MCF 10A (cell line): ENCODE measurements at regions of chr1 and their contacts with region 1.

Region 1: GRCh38 chr1:24321697-24322469 is 2.7 kb downstream of the GRHL3 start:
- DNase-seq: peak; percentile 95
- H3K4me3 Mint-ChIP-seq: peak overlapping the region; percentile 74
- H3K27ac Mint-ChIP-seq: peak overlapping the region; percentile 87
- H3K4me1 Mint-ChIP-seq: peaks cover 64% of the 10 kb centered on the region
- H3K27me3 Mint-ChIP-seq: no peaks in the 10 kb centered on the region
- CTCF ChIP-seq: no peak

Region 2: DNA sequence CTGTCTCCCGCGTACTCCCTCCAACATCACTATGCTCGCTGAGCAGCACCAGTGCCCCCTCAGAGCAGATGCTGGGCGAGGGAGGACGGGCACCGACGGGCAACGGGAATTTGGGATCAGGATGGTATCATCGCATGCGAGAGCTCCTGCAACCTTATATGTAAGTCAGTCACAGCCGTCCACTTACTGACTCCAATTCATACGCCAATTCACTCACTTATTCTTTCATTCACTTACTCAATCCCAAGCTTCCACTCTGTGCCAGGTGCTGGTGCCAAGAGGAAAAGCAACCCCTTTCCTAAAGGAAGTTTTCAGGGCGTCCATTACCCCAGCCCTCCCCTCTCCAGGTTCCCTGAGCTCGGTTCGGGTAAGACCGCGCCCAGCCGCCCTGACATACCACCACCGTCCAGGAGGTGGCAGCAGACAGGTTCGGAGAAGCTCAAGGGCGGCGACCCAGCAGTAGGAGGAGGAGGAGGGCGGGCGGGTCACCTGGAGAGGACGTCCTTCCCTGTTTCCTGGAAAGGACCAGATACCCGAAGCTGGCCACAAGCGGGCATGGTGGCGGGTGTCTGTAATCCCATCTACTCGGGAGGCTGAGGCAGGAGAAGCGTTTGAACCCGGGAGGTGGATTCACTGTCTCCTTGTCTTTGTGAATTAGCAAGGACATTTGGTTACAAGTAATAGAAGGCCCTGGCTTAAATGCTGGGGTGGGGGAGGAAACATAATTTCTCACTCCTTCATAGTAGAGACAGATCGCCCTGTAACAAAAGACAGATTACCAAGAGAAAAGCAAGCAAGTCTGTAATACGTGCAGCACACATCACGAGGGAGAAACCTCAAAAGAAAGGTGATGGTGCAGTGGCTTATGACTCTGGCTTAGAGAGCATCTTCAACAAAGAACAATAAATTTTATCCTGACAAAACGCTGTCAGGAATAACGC is 171.4 kb before region 1 on chr1:
- CTCF ChIA-PET with region 1: interaction called, 4 read pairs
- POLR2A ChIA-PET with region 1: interaction called, 14 read pairs
- intact Hi-C with region 1: no loop called
- DNase-seq: peak; percentile 90
- H3K4me3 Mint-ChIP-seq: peak overlapping the region; percentile 58
- H3K27ac Mint-ChIP-seq: peak overlapping the region; percentile 3
- H3K4me1 Mint-ChIP-seq: peaks cover 20% of the 10 kb centered on the region
- H3K27me3 Mint-ChIP-seq: no peaks in the 10 kb centered on the region
- CTCF ChIP-seq: peak; percentile 81

Region 3: GRCh38 chr1:24289937-24290595 is 31.8 kb before region 1 on chr1:
- CTCF ChIA-PET with region 1: interaction called, 6 read pairs
- POLR2A ChIA-PET with region 1: interaction called, 400 read pairs
- intact Hi-C with region 1: loop called (anchors 2 kb)
- DNase-seq: peak; percentile 99
- H3K4me3 Mint-ChIP-seq: peak overlapping the region; percentile 44
- H3K27ac Mint-ChIP-seq: peak overlapping the region; percentile 94
- H3K4me1 Mint-ChIP-seq: peaks cover 55% of the 10 kb centered on the region
- H3K27me3 Mint-ChIP-seq: no peaks in the 10 kb centered on the region
- CTCF ChIP-seq: no peak

Region 4: DNA sequence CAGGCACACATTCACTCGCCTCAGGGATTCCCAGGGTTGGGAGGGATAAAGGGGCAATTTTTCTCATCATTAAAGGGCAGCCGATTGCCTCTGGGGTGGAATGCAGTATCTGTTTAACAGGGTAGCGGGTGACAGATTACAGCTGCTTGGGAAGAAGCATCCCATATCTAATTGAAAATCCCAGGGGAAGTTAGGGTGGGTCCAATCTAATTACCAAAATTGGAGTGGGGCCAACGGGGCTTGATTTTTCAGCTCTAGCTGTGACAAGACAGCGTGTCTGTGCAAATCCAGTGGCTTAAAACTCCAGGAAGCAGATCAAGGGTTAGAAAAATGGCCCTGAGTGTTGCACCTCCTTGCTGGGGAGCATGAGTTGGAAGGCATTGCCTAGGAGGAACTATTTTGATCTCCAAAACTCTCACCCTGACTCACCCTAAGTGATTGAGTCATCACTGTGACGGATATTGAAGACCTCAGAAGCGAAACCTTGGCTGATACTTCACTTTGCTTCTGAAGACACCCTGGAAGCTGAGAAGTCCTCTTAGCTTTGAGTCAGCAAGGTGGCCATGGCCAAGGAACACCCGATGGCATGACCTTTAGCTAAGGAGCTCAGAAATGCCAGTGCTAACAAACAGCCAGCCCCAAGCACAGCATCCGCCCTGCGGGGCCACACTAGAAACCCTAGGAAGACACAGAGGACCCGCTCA is 43.2 kb after region 1 on chr1:
- CTCF ChIA-PET with region 1: no interaction called
- POLR2A ChIA-PET with region 1: interaction called, 18 read pairs
- intact Hi-C with region 1: no loop called
- DNase-seq: peak; percentile 98
- H3K4me3 Mint-ChIP-seq: peak overlapping the region; percentile 28
- H3K27ac Mint-ChIP-seq: peak overlapping the region; percentile 89
- H3K4me1 Mint-ChIP-seq: peaks cover 33% of the 10 kb centered on the region
- H3K27me3 Mint-ChIP-seq: no peaks in the 10 kb centered on the region
- CTCF ChIP-seq: no peak

Region 5: GRCh38 chr1:24385160-24385940 is 63.5 kb after region 1 on chr1:
- CTCF ChIA-PET with region 1: interaction called, 77 read pairs
- POLR2A ChIA-PET with region 1: interaction called, 54 read pairs
- intact Hi-C with region 1: loop called (anchors 1 kb)
- DNase-seq: peak; percentile 79
- H3K4me3 Mint-ChIP-seq: no peak overlapping the region
- H3K27ac Mint-ChIP-seq: peak overlapping the region; percentile 84
- H3K4me1 Mint-ChIP-seq: peaks cover 66% of the 10 kb centered on the region
- H3K27me3 Mint-ChIP-seq: no peaks in the 10 kb centered on the region
- CTCF ChIP-seq: peak; percentile 53

Region 6: GRCh38 chr1:24481101-24481500 is 159.2 kb after region 1 on chr1:
- CTCF ChIA-PET with region 1: no interaction called
- POLR2A ChIA-PET with region 1: no interaction called
- intact Hi-C with region 1: no loop called
- DNase-seq: no peak
- H3K4me3 Mint-ChIP-seq: no peak overlapping the region
- H3K27ac Mint-ChIP-seq: no peak overlapping the region
- H3K4me1 Mint-ChIP-seq: no peaks in the 10 kb centered on the region
- H3K27me3 Mint-ChIP-seq: no peaks in the 10 kb centered on the region
- CTCF ChIP-seq: no peak